Activated T-helper 2 cell treated with anti-CD3 and anti-CD28 coated beads, Interferon-gamma antibody, Interleukin-2, Interleukin-4, amounts not matched to agents 10 μg/mL and 5 μg/mL and 100 μg/mL, durations not matched to agents 14 hours and 24 hours and 36 hours (primary cell): ENCODE measurements at regions of chrX and their contacts with region 1.

Region 1: DNA sequence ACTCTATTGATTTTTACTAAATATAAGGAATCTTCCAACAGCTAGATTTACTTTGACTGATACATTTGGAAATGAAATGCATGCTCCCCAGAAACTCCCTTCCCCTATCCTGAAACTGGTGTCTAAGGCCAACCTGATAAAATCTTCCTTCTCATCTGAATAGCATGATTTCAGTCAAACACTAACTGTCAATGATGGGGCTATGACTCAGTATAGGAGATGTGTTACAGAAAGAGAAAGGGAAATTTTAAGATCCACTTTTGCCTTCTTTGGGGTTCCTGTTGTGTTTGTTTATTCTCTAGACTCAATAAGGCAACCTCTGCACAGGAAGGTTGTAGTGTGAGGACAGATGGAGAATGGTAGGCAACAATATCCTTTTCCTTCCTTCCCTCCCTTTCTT is 160.7 kb downstream of the MOSPD2 start:
- DNase-seq: no peak
- H3K4me3 Mint-ChIP-seq: no peak overlapping the region
- H3K27ac Mint-ChIP-seq: no peak overlapping the region
- H3K4me1 Mint-ChIP-seq: peaks cover 11% of the 10 kb centered on the region
- H3K27me3 Mint-ChIP-seq: no peaks in the 10 kb centered on the region

Region 2: DNA sequence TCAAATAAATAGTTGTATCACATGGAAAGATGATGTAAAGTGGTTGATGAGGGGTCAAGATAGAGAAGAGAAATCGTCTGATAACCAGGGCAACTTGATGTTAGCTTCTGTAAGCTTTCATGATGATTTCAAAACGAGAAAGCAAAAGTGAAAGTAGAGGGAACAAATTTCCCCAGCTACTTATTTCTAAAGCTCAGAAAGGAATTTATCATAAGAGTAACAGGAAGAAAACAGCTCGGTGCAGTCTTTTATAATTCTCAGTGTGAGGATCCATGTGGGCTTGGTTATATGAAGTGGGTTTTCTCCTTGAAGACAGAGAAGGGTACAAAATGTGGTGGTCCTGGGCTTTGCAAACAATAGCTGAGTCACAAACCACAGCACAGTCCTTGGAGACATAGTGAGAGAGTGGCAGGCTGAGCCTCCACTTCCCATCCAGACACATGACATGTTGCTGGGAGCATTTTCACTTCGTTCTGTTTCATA is 536.7 kb before region 1 on chrX:
- intact Hi-C with region 1: loop called (anchors 2 kb)
- DNase-seq: no peak
- H3K4me3 Mint-ChIP-seq: peak overlapping the region; percentile 57
- H3K27ac Mint-ChIP-seq: peak overlapping the region; percentile 57
- H3K4me1 Mint-ChIP-seq: peaks cover 10% of the 10 kb centered on the region
- H3K27me3 Mint-ChIP-seq: peaks cover 2% of the 10 kb centered on the region

Region 3: GRCh38 chrX:14886252-14886651 is 147.7 kb before region 1 on chrX:
- intact Hi-C with region 1: loop called (anchors 10 kb)
- DNase-seq: no peak
- H3K4me3 Mint-ChIP-seq: no peak overlapping the region
- H3K27ac Mint-ChIP-seq: no peak overlapping the region
- H3K4me1 Mint-ChIP-seq: peaks cover 8% of the 10 kb centered on the region
- H3K27me3 Mint-ChIP-seq: no peaks in the 10 kb centered on the region

Region 4: DNA sequence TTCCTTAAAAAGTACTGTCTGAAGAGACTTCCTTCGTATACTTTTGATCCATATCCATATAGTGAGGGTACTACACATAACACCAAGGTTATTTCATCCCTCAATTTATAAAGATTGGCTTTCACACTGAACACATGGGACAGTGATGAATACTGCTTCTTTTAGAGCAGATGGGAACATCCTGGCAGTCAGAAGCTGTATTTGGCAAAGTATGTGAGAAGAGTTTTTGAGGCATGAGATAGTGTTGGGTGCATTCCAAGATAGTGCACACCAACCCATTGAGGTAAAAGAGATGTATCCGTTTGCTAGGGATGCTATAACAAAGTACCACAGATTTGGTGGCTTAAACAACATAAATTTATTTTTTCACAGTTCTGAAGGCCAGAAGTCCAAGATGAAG is 19.6 kb before region 1 on chrX:
- intact Hi-C with region 1: no loop called
- DNase-seq: no peak
- H3K4me3 Mint-ChIP-seq: no peak overlapping the region
- H3K27ac Mint-ChIP-seq: no peak overlapping the region
- H3K4me1 Mint-ChIP-seq: no peaks in the 10 kb centered on the region
- H3K27me3 Mint-ChIP-seq: no peaks in the 10 kb centered on the region